Calu3 (cell line): ENCODE measurements at regions of chr15 and their contacts with region 1.

Region 1: GRCh38 chr15:98671060-98672008 is 23.0 kb downstream of the IGF1R start:
- DNase-seq: no peak
- H3K4me3 Mint-ChIP-seq: no peak overlapping the region
- H3K27ac Mint-ChIP-seq: no peak overlapping the region
- H3K4me1 Mint-ChIP-seq: peaks cover 61% of the 10 kb centered on the region
- H3K27me3 Mint-ChIP-seq: no peaks in the 10 kb centered on the region
- CTCF ChIP-seq: no peak

Region 2: GRCh38 chr15:98744506-98744905 is 73.2 kb after region 1 on chr15:
- CTCF ChIA-PET with region 1: no interaction called
- intact Hi-C with region 1: loop called (anchors 5 kb)
- DNase-seq: no peak
- H3K4me3 Mint-ChIP-seq: no peak overlapping the region
- H3K27ac Mint-ChIP-seq: peak overlapping the region; percentile 88
- H3K4me1 Mint-ChIP-seq: peaks cover 76% of the 10 kb centered on the region
- H3K27me3 Mint-ChIP-seq: no peaks in the 10 kb centered on the region
- CTCF ChIP-seq: no peak